ENCODE measurements at regions of chr1 and their contacts with region 1.

Region 1: DNA sequence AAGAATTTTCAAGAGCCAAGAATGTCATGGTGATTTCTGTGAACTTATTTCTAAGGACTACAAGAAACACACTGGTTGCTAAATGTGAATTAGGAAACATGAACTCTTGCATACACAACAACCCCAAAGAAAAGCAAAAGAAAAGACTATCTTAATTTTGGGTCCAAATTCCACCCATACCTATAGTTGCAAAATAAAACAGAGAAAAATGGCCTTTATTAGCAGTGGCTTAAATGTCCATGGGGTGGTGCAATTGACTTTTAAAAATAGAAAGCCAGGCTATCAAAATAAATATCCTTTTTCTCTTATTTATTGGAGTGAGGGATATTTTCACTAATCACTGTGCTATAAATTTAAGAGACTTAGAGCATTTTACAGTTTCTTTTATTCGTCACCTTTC is 80.9 kb upstream of the DPYD start:
- DNase-seq: peak; percentile 13
- H3K4me3 ChIP-seq: no peak overlapping the region
- H3K27ac ChIP-seq: no peak overlapping the region
- H3K4me1 ChIP-seq: peaks cover 28% of the 10 kb centered on the region
- H3K27me3 ChIP-seq: no peaks in the 10 kb centered on the region
- CTCF ChIP-seq: peak; percentile 54

Region 2: GRCh38 chr1:98018074-98018473 is 16.3 kb after region 1 on chr1:
- CTCF ChIA-PET with region 1: no interaction called
- POLR2A ChIA-PET with region 1: no interaction called
- intact Hi-C with region 1: no loop called
- DNase-seq: no peak
- H3K4me3 ChIP-seq: no peak overlapping the region
- H3K27ac ChIP-seq: no peak overlapping the region
- H3K4me1 ChIP-seq: no peaks in the 10 kb centered on the region
- H3K27me3 ChIP-seq: no peaks in the 10 kb centered on the region
- CTCF ChIP-seq: no peak

Region 3: GRCh38 chr1:98468111-98468717 is 466.4 kb after region 1 on chr1:
- CTCF ChIA-PET with region 1: no interaction called
- POLR2A ChIA-PET with region 1: no interaction called
- intact Hi-C with region 1: loop called (anchors 5 kb)
- DNase-seq: peak; percentile 80
- H3K4me3 ChIP-seq: no peak overlapping the region
- H3K27ac ChIP-seq: no peak overlapping the region
- H3K4me1 ChIP-seq: peaks cover 15% of the 10 kb centered on the region
- H3K27me3 ChIP-seq: no peaks in the 10 kb centered on the region
- CTCF ChIP-seq: peak; percentile 86

Measured in A673 (cell line).